PC-9 (cell line): ENCODE measurements at regions of chr4 and their contacts with region 1.

Region 1: GRCh38 chr4:8403173-8403753 is 37.3 kb downstream of the ACOX3 start:
- DNase-seq: peak in 1 of 2 experiments; percentile 82
- H3K4me3 ChIP-seq: no peak overlapping the region
- H3K27ac ChIP-seq: no peak overlapping the region
- H3K4me1 ChIP-seq: no peaks in the 10 kb centered on the region
- H3K27me3 ChIP-seq: no peaks in the 10 kb centered on the region
- CTCF ChIP-seq: peak; percentile 91

Region 2: GRCh38 chr4:8015512-8015911 is 387.8 kb before region 1 on chr4:
- CTCF ChIA-PET with region 1: no interaction called
- POLR2A ChIA-PET with region 1: no interaction called
- intact Hi-C with region 1: loop called (anchors 10 kb)
- DNase-seq: no peak
- H3K4me3 ChIP-seq: no peak overlapping the region
- H3K27ac ChIP-seq: no peak overlapping the region
- H3K4me1 ChIP-seq: peaks cover 9% of the 10 kb centered on the region; the same call in 1 of the 2 replicates
- H3K27me3 ChIP-seq: no peaks in the 10 kb centered on the region
- CTCF ChIP-seq: peak; percentile 51

Region 3: DNA sequence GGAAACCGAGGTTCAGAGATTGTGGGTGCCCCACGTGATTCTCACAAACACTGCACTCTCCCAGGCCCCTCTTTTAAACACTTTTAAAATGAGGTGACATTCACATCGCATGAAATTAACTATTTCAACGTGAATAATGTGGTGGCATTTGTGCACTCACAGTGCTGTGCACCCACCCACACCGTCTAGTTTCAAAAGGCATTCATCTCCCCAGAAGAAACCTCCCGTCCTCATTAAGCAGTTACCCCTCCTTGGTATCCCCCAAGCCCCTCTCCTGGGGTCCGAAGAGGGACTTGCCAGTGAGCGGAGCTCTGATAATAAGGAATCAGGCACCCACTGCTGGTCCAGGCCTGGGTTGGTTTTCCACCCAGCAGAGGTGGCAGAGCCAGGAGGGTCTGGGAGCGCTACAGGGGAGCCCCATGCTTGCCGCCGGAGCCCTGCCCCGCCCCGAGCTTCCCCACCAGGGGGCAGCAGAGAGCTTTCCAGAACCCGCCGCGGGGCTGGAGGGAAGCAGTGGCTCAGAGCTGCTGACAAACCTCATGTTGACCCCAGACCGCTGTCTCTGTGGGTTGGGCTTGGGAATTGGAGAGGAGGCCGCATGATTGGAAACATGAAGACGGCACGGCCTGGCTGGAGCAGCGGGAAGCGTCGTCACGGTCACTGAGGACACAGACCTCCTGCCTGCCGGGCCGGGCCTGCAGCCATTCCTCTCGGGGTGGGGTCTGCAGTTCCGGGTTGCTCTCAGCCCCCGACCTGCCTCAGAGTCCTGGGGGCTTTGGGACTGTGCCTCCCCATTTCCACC is 161.2 kb before region 1 on chr4:
- CTCF ChIA-PET with region 1: interaction called, 4 read pairs
- POLR2A ChIA-PET with region 1: no interaction called
- intact Hi-C with region 1: loop called (anchors 1 kb)
- DNase-seq: peak in 1 of 2 experiments; percentile 85
- H3K4me3 ChIP-seq: no peak overlapping the region
- H3K27ac ChIP-seq: no peak overlapping the region
- H3K4me1 ChIP-seq: peaks cover 5% of the 10 kb centered on the region; the same call in 1 of the 2 replicates
- H3K27me3 ChIP-seq: no peaks in the 10 kb centered on the region
- CTCF ChIP-seq: peak; percentile 84